HCT116 (cell line): ENCODE measurements at regions of chr14 and their contacts with region 1.

Region 1: DNA sequence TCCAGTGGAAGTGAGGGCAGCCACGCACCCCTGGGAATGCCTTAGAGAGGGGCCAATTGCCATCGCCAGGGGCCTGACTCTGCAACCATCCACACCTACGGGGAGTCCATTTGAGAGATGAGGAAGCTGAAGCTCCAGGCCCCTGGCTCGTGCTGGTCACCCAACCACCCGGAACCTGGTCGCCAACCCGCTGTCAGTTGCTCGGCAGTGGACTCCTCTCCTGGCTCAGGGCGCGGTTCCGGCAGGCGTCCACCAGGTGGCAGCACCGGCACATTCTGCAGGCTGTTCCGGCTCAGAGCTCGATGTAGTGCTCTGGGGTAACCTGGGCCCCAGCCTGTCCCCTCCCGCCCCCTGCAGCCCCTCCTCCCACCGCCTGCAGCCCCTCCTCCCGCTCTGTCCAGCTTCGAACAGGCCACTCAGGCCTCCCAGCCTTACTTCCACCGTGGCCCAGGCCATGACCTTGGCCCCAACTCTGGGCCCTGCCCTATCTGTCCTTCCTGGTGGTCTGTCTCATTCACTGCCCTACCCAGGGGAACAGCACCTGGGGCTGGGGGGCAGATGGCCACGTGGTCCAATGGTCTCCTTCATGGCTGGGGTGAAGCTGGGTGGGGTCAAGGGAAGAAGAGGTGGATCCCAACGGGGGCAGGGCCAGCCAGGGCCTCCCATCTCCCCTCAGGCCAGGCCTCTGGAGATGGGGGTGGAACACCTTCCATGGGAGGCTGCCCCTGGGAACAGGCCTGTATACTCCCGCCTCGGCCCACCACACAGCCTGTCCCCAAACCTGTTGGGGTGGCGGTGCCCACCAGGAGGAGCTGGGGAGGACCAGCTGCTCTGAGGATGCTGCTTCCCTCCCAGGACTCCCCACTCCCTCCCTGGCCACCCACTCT is 15.7 kb downstream of the SIVA1 start:
- DNase-seq: peak; percentile 51
- ATAC-seq: peak; percentile 92
- H3K4me3 ChIP-seq: no peak overlapping the region
- H3K27ac ChIP-seq: peak overlapping the region; percentile 44
- H3K4me1 ChIP-seq: peaks cover 3 to 9% of the 10 kb centered on the region in 2 experiments; a peak in 3 of 4 replicates
- H3K27me3 ChIP-seq: no peaks in the 10 kb centered on the region
- CTCF ChIP-seq: peak; percentile 68 to 74 (median 69)
- POLR2A ChIP-seq: no peak
- RAD21 ChIP-seq: peak; percentile 85

Region 2: DNA sequence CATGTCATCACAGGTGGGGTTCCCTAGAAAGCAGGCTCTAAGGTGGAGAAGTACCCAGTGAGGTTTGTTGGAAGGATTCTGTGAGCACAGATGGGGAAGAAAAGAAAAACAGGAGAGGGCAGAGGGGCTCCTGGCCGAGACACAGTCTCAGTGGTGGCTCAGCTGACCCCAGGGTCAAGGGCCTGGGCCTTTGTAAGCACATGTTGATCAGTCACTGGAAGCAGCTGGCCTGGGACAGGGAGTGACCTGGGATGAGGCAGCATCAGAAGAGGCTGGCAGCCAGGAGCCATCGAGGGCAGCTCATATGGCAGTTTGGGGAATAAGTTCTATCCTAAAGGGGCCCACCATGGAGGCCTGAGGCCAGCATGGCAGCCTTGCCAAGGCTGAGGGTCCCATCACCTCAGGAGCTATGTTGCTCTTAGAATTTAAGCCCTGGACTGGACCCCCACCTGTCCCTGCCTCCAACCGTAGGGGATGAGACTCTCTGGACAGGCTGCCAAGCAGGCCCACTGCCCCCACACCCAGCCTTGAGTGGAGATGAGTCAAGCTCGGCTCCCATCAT is 157.8 kb before region 1 on chr14:
- CTCF ChIA-PET with region 1: no interaction called
- POLR2A ChIA-PET with region 1: no interaction called
- RAD21 ChIA-PET with region 1: no interaction called
- intact Hi-C with region 1: no loop called
- DNase-seq: no peak
- ATAC-seq: no peak
- H3K4me3 ChIP-seq: no peak overlapping the region
- H3K27ac ChIP-seq: no peak overlapping the region
- H3K4me1 ChIP-seq: no peaks in the 10 kb centered on the region
- H3K27me3 ChIP-seq: peaks cover 39% of the 10 kb centered on the region
- CTCF ChIP-seq: no peak
- POLR2A ChIP-seq: no peak
- RAD21 ChIP-seq: no peak

Region 3: GRCh38 chr14:104752735-104753531 is 15.7 kb before region 1 on chr14 and contains the start of gene SIVA1:
- CTCF ChIA-PET with region 1: interaction called, 11 read pairs
- POLR2A ChIA-PET with region 1: interaction called, 5 read pairs
- RAD21 ChIA-PET with region 1: interaction called in 1 of 2 experiments, 3 read pairs
- intact Hi-C with region 1: no loop called
- DNase-seq: peak; percentile 98
- ATAC-seq: peak; percentile 94
- H3K4me3 ChIP-seq: peak within 1 kb of the TSS; percentile 97 to 99
- H3K27ac ChIP-seq: peak within 1 kb of the TSS; percentile 90
- H3K4me1 ChIP-seq: peaks cover 23 to 35% of the 10 kb centered on the region in 2 experiments
- H3K27me3 ChIP-seq: no peaks in the 10 kb centered on the region
- CTCF ChIP-seq: no peak
- POLR2A ChIP-seq: peak; percentile 65
- RAD21 ChIP-seq: no peak
- total RNA-seq, gene SIVA1: 141 TPM

Region 4: GRCh38 chr14:104786091-104786586 is 17.5 kb after region 1 on chr14:
- CTCF ChIA-PET with region 1: no interaction called
- POLR2A ChIA-PET with region 1: no interaction called
- RAD21 ChIA-PET with region 1: no interaction called
- intact Hi-C with region 1: no loop called
- DNase-seq: no peak
- ATAC-seq: no peak
- H3K4me3 ChIP-seq: no peak overlapping the region
- H3K27ac ChIP-seq: no peak overlapping the region
- H3K4me1 ChIP-seq: no peaks in the 10 kb centered on the region
- H3K27me3 ChIP-seq: no peaks in the 10 kb centered on the region
- CTCF ChIP-seq: no peak
- POLR2A ChIP-seq: no peak
- RAD21 ChIP-seq: no peak

Region 5: DNA sequence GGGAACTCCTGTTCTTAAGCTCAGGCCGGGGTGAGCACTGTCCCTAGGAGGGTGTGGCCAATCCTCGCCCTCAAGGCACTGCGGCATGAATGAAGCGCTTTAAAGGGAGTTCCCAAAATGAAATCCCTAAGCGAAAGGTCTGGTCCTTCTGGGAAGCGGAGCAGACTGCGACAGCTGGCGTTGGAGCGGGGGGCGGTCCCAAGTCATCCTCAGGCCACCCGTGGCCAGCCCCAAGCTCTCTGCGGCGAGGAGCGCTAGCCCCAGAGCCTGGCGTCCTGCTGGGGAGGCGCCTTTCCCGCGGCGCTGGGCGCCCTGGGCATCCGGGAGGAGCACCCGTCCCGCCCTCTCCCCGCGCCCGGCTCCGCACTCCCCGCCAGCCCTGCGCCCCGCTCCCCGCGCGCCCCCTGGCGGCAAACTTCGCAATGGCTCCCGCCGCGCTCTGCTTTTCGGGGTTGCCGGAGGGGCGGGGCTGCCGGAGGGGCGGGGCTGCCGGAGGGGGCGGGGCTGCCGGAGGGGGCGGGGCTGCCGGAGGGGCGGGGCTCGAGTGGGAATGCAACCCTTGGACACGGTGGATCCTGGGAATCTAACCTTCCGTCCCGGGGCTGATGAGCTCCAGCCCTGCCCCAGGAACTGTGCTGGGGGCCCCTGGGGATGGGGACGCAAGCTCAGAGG is 57.6 kb after region 1 on chr14:
- CTCF ChIA-PET with region 1: interaction called, 29 read pairs
- POLR2A ChIA-PET with region 1: interaction called, 3 read pairs
- RAD21 ChIA-PET with region 1: interaction called, 4 to 5 read pairs
- intact Hi-C with region 1: loop called (anchors 1 kb)
- DNase-seq: peak; percentile 47
- ATAC-seq: peak; percentile 81
- H3K4me3 ChIP-seq: peak overlapping the region; percentile 45 to 62
- H3K27ac ChIP-seq: peak overlapping the region; percentile 42; the same call in 1 of the 2 replicates
- H3K4me1 ChIP-seq: peaks cover 16 to 22% of the 10 kb centered on the region in 2 experiments
- H3K27me3 ChIP-seq: no peaks in the 10 kb centered on the region
- CTCF ChIP-seq: peak; percentile 57 to 73 (median 66)
- POLR2A ChIP-seq: no peak
- RAD21 ChIP-seq: peak; percentile 79